Heart right ventricle (tissue), 16 donors: ENCODE measurements at regions of chr5 and their contacts with region 1.

Region 1: DNA sequence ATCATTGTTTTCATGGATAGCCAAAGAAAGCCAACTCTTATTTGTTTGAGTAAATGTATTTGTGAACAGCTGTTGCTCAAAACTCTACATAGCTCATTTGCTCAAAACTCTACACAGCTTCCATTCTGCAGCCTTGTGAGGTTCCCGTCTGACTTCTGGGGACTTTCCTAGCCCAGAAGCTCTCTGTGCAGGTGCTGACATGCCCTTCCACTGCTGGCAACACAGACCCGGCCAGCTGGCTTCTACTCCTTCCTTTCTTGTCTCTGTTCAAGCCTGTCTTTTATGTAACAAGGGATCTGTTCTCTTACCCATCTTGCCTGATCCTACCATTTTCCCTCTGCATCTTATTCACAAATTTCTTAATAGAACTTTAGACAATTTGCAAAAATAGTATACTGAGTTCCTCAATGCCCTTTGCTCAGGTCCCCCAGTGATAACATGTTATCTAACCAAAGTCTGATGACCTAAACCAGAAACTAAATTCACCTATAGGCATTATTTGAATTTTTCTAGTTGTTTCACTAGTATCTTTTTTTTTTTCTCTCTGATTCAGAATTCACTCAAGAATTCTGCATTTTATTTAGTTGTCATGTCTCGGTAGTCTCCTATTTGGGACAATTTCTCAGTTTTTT is 556.5 kb upstream of the SEMA6A start:
- DNase-seq: no peak
- ATAC-seq: no peak
- H3K4me3 ChIP-seq: no peak overlapping the region
- H3K27ac ChIP-seq: no peak overlapping the region
- H3K4me1 ChIP-seq: peaks cover 0 to 15% (median 0%) of the 10 kb centered on the region in 9 donors
- H3K27me3 ChIP-seq: no peaks in the 10 kb centered on the region
- CTCF ChIP-seq: no peak

Region 2: DNA sequence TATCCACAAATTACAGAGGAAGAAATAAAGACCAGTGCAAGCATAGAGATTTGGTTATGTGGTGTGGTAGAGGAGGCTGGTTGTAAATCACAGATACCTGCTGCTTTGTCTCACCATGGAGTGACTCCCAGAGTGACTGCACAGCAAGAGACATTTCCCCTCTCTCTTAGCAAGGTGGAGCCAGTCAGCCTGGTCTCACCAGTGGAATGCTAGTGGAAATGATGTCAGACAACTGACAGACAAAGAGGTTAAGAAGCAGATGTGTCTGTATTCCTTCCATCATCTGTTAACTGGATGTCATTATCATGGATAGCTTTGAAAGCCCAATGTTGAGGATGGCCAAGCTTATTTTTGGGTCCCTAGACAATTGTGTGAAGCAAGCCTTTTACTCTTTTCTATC is 47.1 kb before region 1 on chr5:
- intact Hi-C with region 1: loop called in 1 of 10 experiments (anchors 5 kb)
- DNase-seq: no peak
- ATAC-seq: no peak
- H3K4me3 ChIP-seq: no peak overlapping the region
- H3K27ac ChIP-seq: no peak overlapping the region
- H3K4me1 ChIP-seq: no peaks in the 10 kb centered on the region
- H3K27me3 ChIP-seq: no peaks in the 10 kb centered on the region
- CTCF ChIP-seq: peak in 2 of 9 donors; percentile 17 to 20

Region 3: GRCh38 chr5:117095346-117096332 is 35.5 kb before region 1 on chr5:
- intact Hi-C with region 1: no loop called
- DNase-seq: no peak
- ATAC-seq: no peak
- H3K4me3 ChIP-seq: no peak overlapping the region
- H3K27ac ChIP-seq: no peak overlapping the region
- H3K4me1 ChIP-seq: peaks cover 0 to 7% (median 0%) of the 10 kb centered on the region in 9 donors
- H3K27me3 ChIP-seq: no peaks in the 10 kb centered on the region
- CTCF ChIP-seq: no peak

Region 4: GRCh38 chr5:117235786-117236185 is 104.6 kb after region 1 on chr5:
- intact Hi-C with region 1: loop called in 1 of 10 experiments (anchors 10 kb)
- DNase-seq: peak in 1 of 2 donors; percentile 10
- ATAC-seq: peak in 6 of 8 donors; percentile 51 to 86 (median 62)
- H3K4me3 ChIP-seq: no peak overlapping the region
- H3K27ac ChIP-seq: peak overlapping the region in 3 of 10 donors; percentile 17 to 71 (median 23)
- H3K4me1 ChIP-seq: peaks cover 0 to 4% (median 0%) of the 10 kb centered on the region in 9 donors
- H3K27me3 ChIP-seq: no peaks in the 10 kb centered on the region
- CTCF ChIP-seq: no peak

Region 5: DNA sequence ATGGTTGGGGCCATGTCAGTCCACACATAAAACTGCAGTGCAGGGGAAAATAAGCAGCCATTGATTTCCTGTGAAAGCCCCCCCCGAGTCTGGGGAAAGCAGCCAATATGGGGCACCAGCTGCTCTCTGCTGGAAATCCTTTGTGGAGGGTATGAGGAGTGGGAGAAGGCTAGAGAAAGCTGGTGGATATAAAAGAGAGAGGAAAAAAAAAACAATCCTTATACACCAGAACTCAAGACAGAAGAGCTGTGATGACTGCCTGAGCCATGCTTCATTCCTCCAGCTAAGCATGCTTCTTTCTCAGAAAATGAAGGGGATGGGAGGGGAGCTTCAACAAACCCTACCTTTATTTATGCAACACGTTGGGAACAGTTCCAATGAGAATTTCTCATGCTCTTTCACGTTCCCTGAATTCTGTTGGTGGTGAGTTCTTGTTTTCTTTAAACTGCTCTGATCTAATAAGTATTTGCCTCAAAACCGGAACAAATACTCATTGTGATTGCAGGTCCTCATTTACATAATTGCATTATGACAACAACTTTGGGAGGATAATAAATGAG is 131.5 kb after region 1 on chr5:
- intact Hi-C with region 1: loop called in 1 of 10 experiments (anchors 10 kb)
- DNase-seq: no peak
- ATAC-seq: no peak
- H3K4me3 ChIP-seq: no peak overlapping the region
- H3K27ac ChIP-seq: no peak overlapping the region
- H3K4me1 ChIP-seq: no peaks in the 10 kb centered on the region
- H3K27me3 ChIP-seq: no peaks in the 10 kb centered on the region
- CTCF ChIP-seq: no peak